Common myeloid progenitor, CD34-positive (primary cell): ENCODE measurements at regions of chr7 and their contacts with region 1.

Region 1: DNA sequence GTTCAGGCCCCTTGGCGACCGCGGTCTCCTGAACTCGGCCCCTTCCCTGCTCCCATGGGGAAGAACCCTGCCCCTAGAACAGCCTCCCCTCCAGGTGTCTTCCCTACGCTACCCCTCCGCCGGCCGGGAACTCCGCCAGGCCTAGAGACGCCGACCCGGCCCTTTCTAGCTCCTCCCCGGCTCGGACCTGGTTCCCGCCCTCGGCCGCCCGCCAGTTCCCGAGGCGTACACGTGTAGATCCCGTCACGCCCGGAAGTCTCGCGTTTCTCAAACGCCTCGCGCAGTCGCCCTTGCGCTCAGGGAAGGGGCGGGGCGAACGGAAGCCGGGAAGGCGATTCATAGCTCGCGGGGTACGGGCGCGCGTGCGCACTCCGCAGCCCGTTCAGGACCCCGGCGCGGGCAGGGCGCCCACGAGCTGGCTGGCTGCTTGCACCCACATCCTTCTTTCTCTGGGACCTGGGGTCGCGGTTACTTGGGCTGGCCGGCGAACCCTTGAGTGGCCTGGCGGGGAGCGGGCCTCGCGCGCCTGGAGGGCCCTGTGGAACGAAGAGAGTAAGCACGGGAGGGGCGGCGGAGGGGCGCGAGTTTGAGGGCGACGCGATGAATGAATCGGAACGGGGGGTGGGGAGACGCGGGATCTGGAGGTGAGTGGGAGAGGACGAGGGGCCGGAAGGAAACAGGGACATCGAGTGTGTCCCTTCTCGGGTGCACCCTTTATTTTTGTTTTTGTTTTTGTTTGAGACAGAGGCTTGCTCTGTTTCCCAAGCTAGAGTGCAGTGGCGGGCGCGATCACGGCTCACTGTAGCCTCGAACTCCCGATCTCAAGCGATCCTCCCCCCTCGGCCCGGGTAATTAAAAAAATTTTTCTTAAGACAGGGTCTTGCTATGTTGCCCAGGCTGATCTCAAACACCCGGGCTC is at the start of gene POP7:
- DNase-seq: peak; percentile 98 to 99 (median 98)
- H3K4me3 ChIP-seq: peak within 1 kb of the TSS; percentile 62 to 97 (median 89)
- H3K27ac ChIP-seq: peak within 1 kb of the TSS; percentile 64 to 87
- H3K4me1 ChIP-seq: peaks cover 0 to 23% (median 19%) of the 10 kb centered on the region in 4 experiments
- H3K27me3 ChIP-seq: no peaks in the 10 kb centered on the region

Region 2: DNA sequence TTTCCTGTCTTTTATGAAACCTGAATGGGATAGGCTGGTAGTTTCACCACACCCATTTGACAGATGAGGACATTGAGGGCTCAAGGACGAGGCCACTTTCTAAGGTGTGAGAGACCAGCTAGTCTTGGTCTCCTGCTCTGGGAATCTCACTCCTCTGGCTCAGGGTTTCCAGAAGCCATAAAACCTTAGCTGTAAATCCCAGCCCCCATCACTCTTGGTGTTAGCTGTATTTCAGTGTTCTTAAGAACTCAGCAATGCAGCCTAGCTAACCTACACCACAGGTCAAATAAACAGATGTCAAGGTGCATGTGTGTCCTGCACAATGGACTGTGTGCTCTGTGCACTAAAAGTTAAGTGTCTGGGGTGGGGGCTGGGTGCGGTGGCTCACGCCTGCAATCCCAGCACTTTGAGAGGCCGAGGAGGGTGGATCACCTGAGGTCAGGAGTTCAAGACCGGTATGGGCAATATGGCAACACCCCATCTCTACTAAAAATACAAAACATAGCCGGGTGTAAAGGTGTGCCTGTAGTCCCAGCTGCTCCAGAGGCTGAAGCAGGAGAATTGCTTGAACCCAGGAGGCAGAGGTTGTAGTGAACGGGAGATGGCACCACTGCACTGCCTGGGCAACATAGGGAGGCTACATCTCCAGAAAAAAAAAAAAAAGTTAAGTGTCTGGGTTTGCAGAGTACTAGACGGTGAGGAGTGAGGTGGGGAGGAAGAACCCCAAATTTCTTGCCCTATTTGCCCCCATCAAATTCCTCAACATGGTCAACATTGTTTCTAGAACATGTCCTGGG is 13.7 kb after region 1 on chr7:
- CTCF ChIA-PET with region 1: interaction called, 30 read pairs
- POLR2A ChIA-PET with region 1: no interaction called
- DNase-seq: peak; percentile 31 to 68 (median 65)
- H3K4me3 ChIP-seq: peak overlapping the region in 3 of 7 experiments; percentile 51 to 60 (median 56)
- H3K27ac ChIP-seq: no peak overlapping the region
- H3K4me1 ChIP-seq: peaks cover 0 to 14% (median 8%) of the 10 kb centered on the region in 4 experiments
- H3K27me3 ChIP-seq: peaks cover 0 to 45% (median 29%) of the 10 kb centered on the region in 5 experiments

Region 3: DNA sequence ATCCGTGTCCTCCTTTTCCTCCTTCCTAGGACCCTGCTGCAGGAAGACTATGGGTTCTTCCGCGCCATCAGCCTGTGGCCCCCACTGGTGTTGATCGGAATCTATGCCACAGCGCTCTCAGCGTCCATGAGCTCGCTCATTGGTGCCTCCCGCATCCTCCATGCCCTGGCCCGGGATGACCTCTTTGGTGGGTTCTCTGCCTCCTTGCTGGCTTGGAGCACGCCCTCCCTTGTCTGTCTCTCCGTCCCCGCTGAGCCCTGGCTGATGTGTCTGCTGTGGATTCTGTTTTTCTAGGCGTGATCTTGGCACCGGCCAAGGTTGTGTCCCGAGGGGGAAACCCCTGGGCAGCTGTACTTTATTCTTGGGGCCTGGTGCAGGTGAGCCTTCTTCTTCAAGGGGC is 153.8 kb after region 1 on chr7:
- CTCF ChIA-PET with region 1: interaction called, 11 read pairs
- POLR2A ChIA-PET with region 1: no interaction called
- DNase-seq: no peak
- H3K4me3 ChIP-seq: no peak overlapping the region
- H3K27ac ChIP-seq: no peak overlapping the region
- H3K4me1 ChIP-seq: peaks cover 0 to 32% (median 16%) of the 10 kb centered on the region in 4 experiments
- H3K27me3 ChIP-seq: no peaks in the 10 kb centered on the region